HCT116 (cell line): ENCODE measurements at regions of chr22 and their contacts with region 1.

Region 1: GRCh38 chr22:33000342-33001280 is 57.6 kb downstream of the SYN3 start:
- DNase-seq: no peak
- ATAC-seq: peak; percentile 88
- H3K4me3 ChIP-seq: no peak overlapping the region
- H3K27ac ChIP-seq: no peak overlapping the region
- H3K4me1 ChIP-seq: peaks cover 0 to 4% of the 10 kb centered on the region in 2 experiments; a peak in 1 of 4 replicates
- H3K27me3 ChIP-seq: peaks cover 5% of the 10 kb centered on the region
- CTCF ChIP-seq: peak; percentile 31 to 91 (median 83); a peak in 4 of 6 replicates
- POLR2A ChIP-seq: no peak
- RAD21 ChIP-seq: peak; percentile 66

Region 2: GRCh38 chr22:32660292-32660691 is 340.3 kb before region 1 on chr22:
- CTCF ChIA-PET with region 1: interaction called, 3 read pairs
- POLR2A ChIA-PET with region 1: no interaction called
- RAD21 ChIA-PET with region 1: no interaction called
- intact Hi-C with region 1: loop called (anchors 5 kb)
- DNase-seq: peak; percentile 37
- ATAC-seq: peak; percentile 94
- H3K4me3 ChIP-seq: no peak overlapping the region
- H3K27ac ChIP-seq: no peak overlapping the region
- H3K4me1 ChIP-seq: no peaks in the 10 kb centered on the region
- H3K27me3 ChIP-seq: peaks cover 19% of the 10 kb centered on the region; the same call in 1 of the 2 replicates
- CTCF ChIP-seq: peak; percentile 77 to 82 (median 80)
- POLR2A ChIP-seq: no peak
- RAD21 ChIP-seq: peak; percentile 85

Region 3: GRCh38 chr22:32926600-32926999 is 74.0 kb before region 1 on chr22:
- CTCF ChIA-PET with region 1: no interaction called
- POLR2A ChIA-PET with region 1: no interaction called
- RAD21 ChIA-PET with region 1: no interaction called
- intact Hi-C with region 1: loop called (anchors 1 kb)
- DNase-seq: peak; percentile 21
- ATAC-seq: peak; percentile 82
- H3K4me3 ChIP-seq: no peak overlapping the region
- H3K27ac ChIP-seq: no peak overlapping the region
- H3K4me1 ChIP-seq: no peaks in the 10 kb centered on the region
- H3K27me3 ChIP-seq: 0 out of 2 replicates have a peak, but pooled peaks cover 4% of the 10 kb centered on the region
- CTCF ChIP-seq: peak; percentile 27 to 69 (median 66); a peak in 5 of 6 replicates
- POLR2A ChIP-seq: no peak
- RAD21 ChIP-seq: peak; percentile 30; the same call in 1 of the 2 replicates